ENCODE measurements at regions of chr11 and their contacts with region 1.

Region 1: DNA sequence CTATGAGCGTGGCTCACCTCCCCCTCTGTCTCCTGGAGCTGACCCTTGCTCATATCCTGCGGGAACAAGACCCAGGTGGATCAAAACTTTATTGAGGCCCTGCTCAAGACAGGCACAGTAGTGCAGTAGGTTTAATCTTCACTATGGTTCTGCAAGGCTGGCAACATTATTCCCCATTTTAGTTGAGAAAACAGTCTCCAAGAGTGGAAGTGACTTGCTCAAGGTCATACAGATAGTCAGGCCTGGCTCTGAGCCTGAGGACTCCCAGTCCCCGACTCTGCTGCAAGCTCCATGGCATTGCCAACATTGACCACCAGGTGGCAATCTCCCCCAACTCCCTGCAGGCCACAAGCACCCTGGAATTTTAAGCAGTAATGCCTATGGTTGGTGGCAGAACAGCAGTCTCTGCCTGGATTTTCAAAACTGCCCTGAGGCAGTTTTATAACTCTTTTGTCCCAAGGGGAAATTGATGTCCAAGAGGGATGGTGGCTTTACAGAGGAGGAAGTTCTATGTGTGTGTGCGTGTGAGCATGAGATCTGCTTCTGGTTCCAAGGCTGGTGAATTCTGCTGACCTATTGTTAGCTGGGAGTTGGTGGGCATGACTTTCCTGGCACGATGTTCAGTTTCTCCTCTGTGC is 34.1 kb downstream of the NEU3 start:
- DNase-seq: peak; percentile 86

Region 2: DNA sequence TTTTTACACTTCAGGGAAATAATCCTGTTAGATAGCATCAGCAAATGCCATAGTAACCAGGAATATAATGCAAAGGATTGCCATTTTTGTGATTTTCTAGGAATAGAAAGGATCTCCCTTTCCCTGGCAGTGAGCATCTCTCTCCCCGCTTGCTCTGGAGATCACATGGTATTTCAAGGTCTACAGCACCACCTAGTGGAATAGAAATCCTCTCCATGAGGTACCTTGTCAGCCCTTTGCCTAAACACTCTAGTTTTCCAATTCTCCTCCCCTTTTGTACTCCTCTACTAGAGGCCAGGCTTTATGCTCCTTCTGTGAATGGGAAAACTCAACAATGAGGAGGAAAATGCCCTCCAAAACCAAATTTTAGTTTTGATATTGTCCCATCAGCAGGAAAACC is 152.4 kb before region 1 on chr11:
- CTCF ChIA-PET with region 1: no interaction called
- POLR2A ChIA-PET with region 1: no interaction called
- DNase-seq: peak; percentile 42

Region 3: GRCh38 chr11:75011357-75011756 is 11.5 kb before region 1 on chr11:
- CTCF ChIA-PET with region 1: interaction called, 11 read pairs
- POLR2A ChIA-PET with region 1: no interaction called
- DNase-seq: no peak

Measured in HEK293T (cell line).